Activated CD8-positive, alpha-beta T cell treated with anti-CD3 and anti-CD28 coated beads for 36 hours (primary cell): ENCODE measurements at regions of chr2 and their contacts with region 1.

Region 1: DNA sequence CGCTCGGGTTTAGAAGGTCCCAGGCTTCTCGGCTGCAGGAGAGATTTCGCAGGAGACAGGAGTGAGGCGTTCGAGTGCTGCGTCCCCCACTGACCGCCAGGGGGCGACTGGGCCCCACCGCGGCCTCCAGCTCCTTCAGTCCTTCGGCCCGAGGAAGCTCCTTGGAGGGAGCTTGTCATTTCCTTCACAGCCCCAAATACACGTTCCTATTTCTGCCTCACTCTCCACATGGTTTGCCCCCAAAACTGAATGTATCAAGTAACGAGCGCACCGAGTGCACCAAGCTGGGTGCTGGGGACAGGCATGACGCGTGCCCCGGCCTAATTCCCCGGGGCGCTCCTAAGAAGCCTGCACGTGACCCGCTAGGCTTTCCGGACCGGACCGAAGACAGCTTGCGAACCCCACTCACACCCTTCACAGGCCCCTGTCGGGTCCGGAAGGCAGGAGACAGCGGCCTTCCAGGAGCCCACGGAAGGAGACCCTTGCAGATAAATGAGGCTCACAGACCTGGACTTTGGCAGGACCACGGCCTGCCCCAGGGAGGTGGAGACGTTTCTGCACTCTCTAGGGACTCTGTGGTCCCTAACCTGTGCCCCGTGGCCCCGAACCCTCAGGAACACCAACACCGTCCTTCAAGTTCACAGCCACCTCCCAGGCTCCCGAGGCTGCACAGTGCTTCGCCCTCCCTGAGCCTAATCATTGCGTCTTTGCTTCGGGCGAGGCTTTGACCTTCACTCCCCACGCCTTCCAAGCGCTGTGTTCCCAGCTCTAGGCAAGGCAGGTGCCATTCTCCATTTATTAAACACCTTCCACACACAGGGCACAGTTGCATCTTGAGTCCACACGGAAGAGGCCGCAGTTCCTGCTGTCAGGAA is 13.0 kb upstream of the FAHD2A start:
- DNase-seq: peak; percentile 67
- ATAC-seq: peak; percentile 91
- H3K4me3 Mint-ChIP-seq: no peak overlapping the region
- H3K27ac Mint-ChIP-seq: no peak overlapping the region
- H3K4me1 Mint-ChIP-seq: no peaks in the 10 kb centered on the region
- H3K27me3 Mint-ChIP-seq: peaks cover 4% of the 10 kb centered on the region
- CTCF ChIP-seq: peak; percentile 91

Region 2: DNA sequence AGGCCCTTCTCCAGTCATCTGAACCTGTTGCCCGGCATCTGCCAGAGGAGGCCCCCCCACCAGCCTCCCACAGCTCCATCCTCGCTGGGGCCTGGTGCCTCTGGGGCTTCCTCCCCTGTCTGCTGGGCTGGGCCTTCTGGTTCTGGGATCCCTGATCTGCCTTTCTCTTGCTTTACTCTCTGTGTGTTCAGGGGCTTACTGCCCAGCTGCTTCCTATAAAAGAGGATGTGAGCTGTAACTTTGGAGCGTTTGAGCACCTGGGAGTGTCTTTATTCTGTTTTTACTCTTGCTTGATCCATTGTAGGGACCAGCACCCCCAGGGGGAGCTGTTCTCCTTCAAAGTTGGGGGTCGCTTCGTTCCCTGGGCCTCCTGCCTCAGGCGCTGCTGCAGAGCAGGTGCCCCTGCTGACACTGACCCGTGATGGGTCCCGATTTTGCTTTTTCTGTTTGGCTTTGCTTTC is 10.1 kb before region 1 on chr2:
- CTCF ChIA-PET with region 1: interaction called, 14 read pairs
- POLR2A ChIA-PET with region 1: no interaction called
- intact Hi-C with region 1: no loop called
- DNase-seq: peak; percentile 46
- ATAC-seq: no peak
- H3K4me3 Mint-ChIP-seq: no peak overlapping the region
- H3K27ac Mint-ChIP-seq: no peak overlapping the region
- H3K4me1 Mint-ChIP-seq: no peaks in the 10 kb centered on the region
- H3K27me3 Mint-ChIP-seq: peaks cover 4% of the 10 kb centered on the region
- CTCF ChIP-seq: no peak

Region 3: DNA sequence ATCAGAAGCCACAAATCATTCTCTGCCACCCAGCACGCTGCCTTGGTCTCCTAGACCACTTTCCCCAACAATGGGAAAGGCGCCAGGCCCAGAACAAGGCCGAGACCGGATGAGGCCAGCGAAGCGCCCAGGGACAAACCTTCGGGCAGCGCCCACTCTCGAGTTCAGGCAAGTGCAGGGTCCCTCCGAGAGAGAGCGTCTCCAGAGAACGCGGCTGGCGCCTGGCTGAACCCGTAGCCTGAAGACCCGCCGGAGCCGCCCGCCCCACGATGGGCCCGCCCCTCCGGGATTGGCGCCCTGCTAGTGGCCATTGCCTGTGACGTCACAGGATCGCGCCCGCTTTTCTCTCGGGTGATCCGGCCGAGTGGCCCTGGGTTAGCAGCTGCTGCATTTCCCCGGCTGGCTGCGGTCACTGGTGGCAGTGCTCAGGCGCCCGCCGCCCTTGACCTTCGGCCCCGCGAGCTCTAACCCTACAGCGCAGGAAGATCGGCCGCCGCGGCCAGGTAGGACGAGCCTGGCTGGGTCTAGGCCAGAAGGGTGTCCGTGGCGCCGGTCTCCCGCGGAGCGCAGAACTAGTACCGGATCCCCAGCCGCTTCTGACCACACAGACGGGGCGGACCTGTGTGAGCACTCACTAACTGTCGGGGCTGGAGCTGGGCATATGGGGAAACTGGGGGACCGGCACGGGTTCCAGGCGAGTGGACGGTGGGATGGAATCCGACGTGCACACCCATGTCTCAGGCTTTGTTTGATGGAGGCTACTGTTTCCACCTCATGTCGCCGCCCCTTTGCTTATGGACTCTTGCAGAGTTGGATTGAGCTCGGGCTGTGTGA is 13.1 kb after region 1 on chr2 and contains the start of gene FAHD2A:
- CTCF ChIA-PET with region 1: interaction called, 25 read pairs
- POLR2A ChIA-PET with region 1: no interaction called
- intact Hi-C with region 1: no loop called
- DNase-seq: peak; percentile 98
- ATAC-seq: peak; percentile 95
- H3K4me3 Mint-ChIP-seq: peak within 1 kb of the TSS; percentile 96
- H3K27ac Mint-ChIP-seq: peak within 1 kb of the TSS; percentile 95
- H3K4me1 Mint-ChIP-seq: peaks cover 16% of the 10 kb centered on the region
- H3K27me3 Mint-ChIP-seq: no peaks in the 10 kb centered on the region
- CTCF ChIP-seq: no peak
- total RNA-seq, gene FAHD2A: 40.8 to 44.0 TPM